Heart right ventricle (tissue), 16 donors: ENCODE measurements at regions of chr18 and their contacts with region 1.

Region 1: DNA sequence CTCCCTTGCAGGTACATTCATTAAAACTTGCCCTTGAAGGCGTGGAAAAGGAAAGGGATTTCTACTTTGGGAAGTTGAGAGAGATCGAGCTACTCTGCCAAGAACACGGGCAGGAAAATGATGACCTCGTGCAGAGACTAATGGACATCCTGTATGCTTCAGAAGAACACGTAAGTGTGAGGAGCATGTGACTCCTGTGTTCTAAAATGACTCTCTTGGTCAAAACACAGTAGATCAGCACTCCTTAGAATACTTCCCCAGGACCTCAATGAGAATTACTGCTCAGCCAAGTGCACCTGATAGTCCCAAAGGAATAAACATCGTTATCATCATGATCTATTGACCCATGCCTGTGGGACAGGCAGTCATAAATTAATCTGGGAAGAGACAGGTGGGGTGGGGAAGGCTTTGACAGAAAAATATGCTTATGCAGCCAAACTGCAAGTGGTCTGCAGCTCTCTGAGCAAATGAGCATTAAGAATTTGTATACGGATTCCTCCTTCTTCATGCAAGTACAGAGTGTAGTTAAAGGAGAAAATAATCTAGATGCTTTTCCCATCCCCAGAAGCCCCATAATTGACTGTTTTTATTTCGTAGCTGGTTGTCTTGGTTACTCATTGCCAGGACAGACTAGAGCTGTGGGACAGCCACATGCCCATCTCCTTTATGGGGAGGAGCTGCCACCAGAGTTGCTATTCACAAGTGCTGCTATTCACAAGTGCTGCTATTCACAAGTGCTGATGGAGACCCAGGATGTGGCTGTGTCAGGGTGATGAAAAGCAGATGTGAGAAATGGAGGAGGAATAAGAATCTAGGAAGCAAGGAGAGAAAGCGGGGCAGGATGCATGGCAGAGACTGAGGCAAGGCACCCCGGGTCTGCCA is 91.0 kb downstream of the MAPRE2 start:
- DNase-seq: no peak
- ATAC-seq: peak in 5 of 8 donors; percentile 48 to 82 (median 68)
- H3K4me3 ChIP-seq: no peak overlapping the region
- H3K27ac ChIP-seq: peak overlapping the region in 8 of 10 donors; percentile 25 to 63 (median 47)
- H3K4me1 ChIP-seq: peaks cover 9 to 53% (median 31%) of the 10 kb centered on the region in 9 donors
- H3K27me3 ChIP-seq: no peaks in the 10 kb centered on the region
- CTCF ChIP-seq: no peak

Region 2: GRCh38 chr18:34880882-34881834 is 251.1 kb before region 1 on chr18:
- intact Hi-C with region 1: loop called in 1 of 10 experiments (anchors 10 kb)
- DNase-seq: no peak
- ATAC-seq: peak in 7 of 8 donors; percentile 75 to 93 (median 86)
- H3K4me3 ChIP-seq: no peak overlapping the region
- H3K27ac ChIP-seq: peak overlapping the region; percentile 17 to 81 (median 66)
- H3K4me1 ChIP-seq: peaks cover 0 to 25% (median 11%) of the 10 kb centered on the region in 9 donors
- H3K27me3 ChIP-seq: no peaks in the 10 kb centered on the region
- CTCF ChIP-seq: peak in 6 of 9 donors; percentile 9 to 52 (median 32)

Region 3: GRCh38 chr18:35029770-35030169 is 102.5 kb before region 1 on chr18:
- intact Hi-C with region 1: loop called in 1 of 10 experiments (anchors 5 kb)
- DNase-seq: no peak
- ATAC-seq: peak in 4 of 8 donors; percentile 39 to 56 (median 50)
- H3K4me3 ChIP-seq: peak overlapping the region in 9 of 10 donors; percentile 4 to 50 (median 36)
- H3K27ac ChIP-seq: peak overlapping the region in 9 of 10 donors; percentile 3 to 92 (median 42)
- H3K4me1 ChIP-seq: peaks cover 8 to 45% (median 30%) of the 10 kb centered on the region in 9 donors
- H3K27me3 ChIP-seq: no peaks in the 10 kb centered on the region
- CTCF ChIP-seq: peak in 4 of 9 donors; percentile 15 to 36 (median 28)

Region 4: DNA sequence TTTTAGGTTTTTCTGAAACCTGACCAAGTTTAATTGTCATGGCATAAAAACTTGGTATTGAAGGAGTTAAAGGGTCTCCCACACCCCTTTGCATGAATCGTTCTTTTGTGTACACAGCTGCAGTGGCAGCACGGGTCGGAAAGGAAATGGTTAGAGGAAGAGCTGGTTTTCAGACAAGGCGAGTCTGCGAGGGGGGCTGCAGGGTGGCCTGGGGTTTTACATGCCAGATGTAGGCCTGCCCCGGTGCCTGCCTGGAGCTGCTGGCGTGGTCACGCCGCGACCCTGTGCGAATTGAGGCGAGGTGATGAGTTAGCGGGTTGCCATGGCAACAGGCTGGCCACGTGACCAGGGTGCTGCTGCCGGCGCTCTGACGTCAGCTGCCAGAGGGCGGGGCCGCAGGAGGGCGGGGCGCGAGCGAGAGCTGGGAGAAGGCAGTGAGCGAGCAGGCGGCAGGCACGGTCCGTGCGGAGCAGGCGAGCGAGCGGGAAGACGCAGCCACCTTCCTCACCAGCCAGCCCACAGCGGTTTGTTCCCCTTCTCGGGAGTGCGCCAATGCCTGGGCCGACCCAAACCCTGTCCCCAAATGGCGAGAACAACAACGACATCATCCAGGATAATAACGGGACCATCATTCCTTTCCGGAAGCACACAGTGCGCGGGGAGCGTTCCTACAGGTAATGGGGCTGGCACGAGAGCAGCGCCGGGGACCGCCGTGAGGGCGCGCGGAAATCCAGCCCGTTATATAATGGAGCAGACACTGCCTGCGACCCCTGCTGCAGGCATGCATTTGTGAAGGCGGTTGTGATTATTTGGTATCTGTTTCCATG is 91.1 kb before region 1 on chr18 and contains the start of gene MAPRE2:
- intact Hi-C with region 1: loop called in 4 of 10 experiments (anchors 5 kb)
- DNase-seq: peak; percentile 98 to 99
- ATAC-seq: peak; percentile 96 to 98 (median 97)
- H3K4me3 ChIP-seq: peak within 1 kb of the TSS; percentile 65 to 94 (median 82)
- H3K27ac ChIP-seq: peak within 1 kb of the TSS; percentile 63 to 92 (median 88)
- H3K4me1 ChIP-seq: peaks cover under 1 to 67% (median 44%) of the 10 kb centered on the region in 9 donors
- H3K27me3 ChIP-seq: no peaks in the 10 kb centered on the region
- CTCF ChIP-seq: peak in 1 of 9 donors; percentile 9
- total RNA-seq, gene MAPRE2: 63.9 to 211 (median 137) TPM

Region 5: GRCh38 chr18:35085450-35086380 is 46.5 kb before region 1 on chr18:
- intact Hi-C with region 1: loop called in 2 of 10 experiments (anchors 5 kb)
- DNase-seq: peak in 1 of 2 donors; percentile 26
- ATAC-seq: peak in 5 of 8 donors; percentile 72 to 85 (median 78)
- H3K4me3 ChIP-seq: no peak overlapping the region
- H3K27ac ChIP-seq: peak overlapping the region in 9 of 10 donors; percentile 38 to 87 (median 79)
- H3K4me1 ChIP-seq: peaks cover 7 to 92% (median 70%) of the 10 kb centered on the region in 9 donors
- H3K27me3 ChIP-seq: no peaks in the 10 kb centered on the region
- CTCF ChIP-seq: peak in 1 of 9 donors; percentile 11

Region 6: GRCh38 chr18:35155398-35156117 is 23.3 kb after region 1 on chr18:
- intact Hi-C with region 1: no loop called
- DNase-seq: no peak
- ATAC-seq: peak in 6 of 8 donors; percentile 33 to 75 (median 60)
- H3K4me3 ChIP-seq: no peak overlapping the region
- H3K27ac ChIP-seq: no peak overlapping the region
- H3K4me1 ChIP-seq: peaks cover 0 to 33% (median 9%) of the 10 kb centered on the region in 9 donors
- H3K27me3 ChIP-seq: no peaks in the 10 kb centered on the region
- CTCF ChIP-seq: no peak